ENCODE measurements at regions of chrX and their contacts with region 1.

Region 1: DNA sequence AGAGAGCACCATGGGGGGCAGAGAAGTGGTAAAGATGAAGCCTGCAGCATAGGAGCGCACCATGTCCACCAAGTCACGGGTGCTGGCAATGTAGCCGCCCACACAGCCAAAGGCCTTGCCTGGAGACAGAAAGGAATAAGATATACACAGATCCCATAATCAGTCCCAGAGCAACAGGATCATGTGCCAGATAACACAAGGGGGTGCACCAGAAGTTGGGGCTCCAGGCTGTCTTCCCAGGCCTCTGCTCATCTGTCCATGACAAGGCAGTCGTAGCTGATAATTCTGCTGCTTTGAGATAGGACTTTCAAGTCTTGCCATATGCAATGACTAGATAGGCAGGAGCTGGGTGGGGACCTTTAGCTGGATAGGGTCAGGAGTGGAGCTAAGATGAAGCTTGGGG is 14.7 kb downstream of the APEX2 start:
- DNase-seq: peak; percentile 87 to 91 (median 89)
- ATAC-seq: peak; percentile 92
- H3K4me3 ChIP-seq: no peak overlapping the region
- H3K27ac ChIP-seq: peak overlapping the region; percentile 67; the same call in 2 of the 3 replicates
- H3K4me1 ChIP-seq: peaks cover 11 to 17% of the 10 kb centered on the region in 2 experiments
- H3K27me3 ChIP-seq: no peaks in the 10 kb centered on the region
- CTCF ChIP-seq: no peak
- EP300 ChIP-seq: peak; percentile 96
- POLR2A ChIP-seq: no peak
- RAD21 ChIP-seq: peak in 1 of 2 experiments; percentile 31; a peak in 2 of 4 replicates

Region 2: DNA sequence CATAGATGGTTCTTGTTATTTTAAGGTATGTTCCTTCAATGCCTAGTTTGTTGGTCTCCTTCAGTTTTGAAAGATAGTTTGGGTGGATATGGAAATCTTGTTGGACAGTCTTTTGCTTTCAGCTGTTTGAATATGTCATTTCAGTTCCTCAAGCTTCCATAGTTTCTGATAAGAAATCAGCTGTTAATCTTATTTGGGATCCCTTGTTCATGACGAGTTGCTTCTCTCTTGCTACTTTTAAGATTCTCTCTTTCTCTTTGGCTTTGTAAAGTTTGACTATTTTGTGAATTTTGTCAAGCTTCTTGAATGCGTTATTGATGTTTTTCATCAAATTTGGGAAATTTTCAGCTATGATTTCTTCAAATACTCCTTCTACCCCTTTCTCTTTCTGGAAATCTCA is 355.4 kb before region 1 on chrX:
- CTCF ChIA-PET with region 1: no interaction called
- POLR2A ChIA-PET with region 1: no interaction called
- in situ Hi-C with region 1: no loop called
- intact Hi-C with region 1: no loop called
- DNase-seq: no peak
- ATAC-seq: no peak
- H3K4me3 ChIP-seq: no peak overlapping the region
- H3K27ac ChIP-seq: no peak overlapping the region
- H3K4me1 ChIP-seq: no peaks in the 10 kb centered on the region
- H3K27me3 ChIP-seq: no peaks in the 10 kb centered on the region
- CTCF ChIP-seq: no peak
- EP300 ChIP-seq: no peak
- POLR2A ChIP-seq: no peak
- RAD21 ChIP-seq: no peak

Region 3: DNA sequence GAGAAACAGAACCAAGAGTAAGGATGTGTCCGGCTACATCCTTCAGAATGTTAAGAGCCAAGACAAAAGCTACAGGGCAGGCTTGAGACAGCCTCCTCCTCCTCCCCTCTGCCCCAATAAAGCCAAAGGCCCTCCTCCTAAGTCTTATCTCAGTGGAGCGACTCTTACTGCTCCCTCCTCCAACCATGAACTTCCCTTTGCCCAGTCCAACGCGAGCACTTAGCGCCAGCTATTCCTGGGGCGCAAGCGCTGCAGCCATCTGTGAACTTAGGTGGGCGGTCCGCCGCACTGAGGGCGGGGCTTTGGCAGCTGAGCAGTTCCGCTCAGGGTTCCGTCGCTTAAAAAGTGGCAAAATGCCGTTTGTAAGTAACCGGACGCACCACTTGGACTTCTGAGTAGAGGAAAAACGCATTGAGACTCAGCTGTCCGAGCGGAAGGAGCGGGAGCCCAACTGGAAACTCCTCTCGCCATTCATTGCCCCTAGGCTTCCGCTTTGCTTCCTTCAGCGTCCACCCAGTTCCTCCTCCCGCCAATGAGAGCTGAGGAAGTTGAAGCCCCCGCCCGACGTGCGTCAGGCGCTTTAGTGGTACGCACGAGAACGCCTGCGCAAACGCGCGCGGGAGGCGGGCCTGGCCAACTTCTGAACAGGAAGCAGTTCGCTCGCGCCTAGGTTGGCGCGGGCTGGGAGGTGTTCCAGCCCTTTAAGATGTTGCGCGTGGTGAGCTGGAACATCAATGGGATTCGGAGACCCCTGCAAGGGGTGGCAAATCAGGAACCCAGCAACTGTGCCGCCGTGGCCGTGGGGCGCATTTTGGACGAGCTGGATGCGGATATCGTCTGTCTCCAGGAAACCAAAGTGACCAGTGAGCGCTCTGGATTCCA is 14.9 kb before region 1 on chrX and contains the start of gene APEX2:
- CTCF ChIA-PET with region 1: no interaction called
- POLR2A ChIA-PET with region 1: interaction called, 18 read pairs
- in situ Hi-C with region 1: no loop called
- intact Hi-C with region 1: no loop called
- DNase-seq: peak; percentile 79 to 94 (median 83)
- ATAC-seq: peak; percentile 97
- H3K4me3 ChIP-seq: peak within 1 kb of the TSS; percentile 60
- H3K27ac ChIP-seq: peak within 1 kb of the TSS; percentile 94
- H3K4me1 ChIP-seq: peaks cover 4 to 13% of the 10 kb centered on the region in 2 experiments; a peak in 3 of 5 replicates
- H3K27me3 ChIP-seq: 0 out of 5 replicates have a peak, but pooled peaks cover 0 to under 1% of the 10 kb centered on the region in 2 experiments
- CTCF ChIP-seq: no peak
- EP300 ChIP-seq: no peak
- POLR2A ChIP-seq: peak; percentile 88
- RAD21 ChIP-seq: no peak
- polyA plus RNA-seq, gene APEX2: 16.4 to 34.2 TPM

Region 4: DNA sequence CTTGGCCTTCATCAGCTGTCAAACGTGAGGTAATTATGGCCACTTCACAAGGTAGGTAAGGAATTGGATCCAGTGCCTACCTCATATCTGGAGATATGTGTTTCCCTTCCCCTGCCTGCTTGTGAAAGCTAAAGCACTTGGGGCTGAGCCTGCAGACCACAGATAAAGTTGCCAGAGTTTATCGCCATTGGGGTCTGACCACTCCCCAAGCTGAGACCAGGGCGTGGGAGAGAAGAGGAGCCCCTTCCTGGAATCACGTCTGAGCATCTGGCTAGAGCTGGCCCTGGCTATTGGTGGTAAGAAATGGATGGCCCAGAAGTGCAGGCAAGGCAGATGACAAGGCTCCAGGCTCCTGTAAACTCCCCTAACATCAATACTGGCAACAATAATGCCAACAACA is 13.1 kb after region 1 on chrX:
- CTCF ChIA-PET with region 1: no interaction called
- POLR2A ChIA-PET with region 1: interaction called, 8 read pairs
- in situ Hi-C with region 1: no loop called
- intact Hi-C with region 1: loop called (anchors 1 kb)
- DNase-seq: peak; percentile 61 to 88 (median 76)
- ATAC-seq: peak; percentile 92
- H3K4me3 ChIP-seq: no peak overlapping the region
- H3K27ac ChIP-seq: peak overlapping the region; percentile 52; the same call in 1 of the 3 replicates
- H3K4me1 ChIP-seq: peaks cover 9 to 35% of the 10 kb centered on the region in 2 experiments; a peak in 4 of 5 replicates
- H3K27me3 ChIP-seq: no peaks in the 10 kb centered on the region
- CTCF ChIP-seq: no peak
- EP300 ChIP-seq: peak; percentile 93
- POLR2A ChIP-seq: no peak
- RAD21 ChIP-seq: no peak